Ascending aorta (tissue), 2 donors: ENCODE measurements at regions of chr4 and their contacts with region 1.

Region 1: DNA sequence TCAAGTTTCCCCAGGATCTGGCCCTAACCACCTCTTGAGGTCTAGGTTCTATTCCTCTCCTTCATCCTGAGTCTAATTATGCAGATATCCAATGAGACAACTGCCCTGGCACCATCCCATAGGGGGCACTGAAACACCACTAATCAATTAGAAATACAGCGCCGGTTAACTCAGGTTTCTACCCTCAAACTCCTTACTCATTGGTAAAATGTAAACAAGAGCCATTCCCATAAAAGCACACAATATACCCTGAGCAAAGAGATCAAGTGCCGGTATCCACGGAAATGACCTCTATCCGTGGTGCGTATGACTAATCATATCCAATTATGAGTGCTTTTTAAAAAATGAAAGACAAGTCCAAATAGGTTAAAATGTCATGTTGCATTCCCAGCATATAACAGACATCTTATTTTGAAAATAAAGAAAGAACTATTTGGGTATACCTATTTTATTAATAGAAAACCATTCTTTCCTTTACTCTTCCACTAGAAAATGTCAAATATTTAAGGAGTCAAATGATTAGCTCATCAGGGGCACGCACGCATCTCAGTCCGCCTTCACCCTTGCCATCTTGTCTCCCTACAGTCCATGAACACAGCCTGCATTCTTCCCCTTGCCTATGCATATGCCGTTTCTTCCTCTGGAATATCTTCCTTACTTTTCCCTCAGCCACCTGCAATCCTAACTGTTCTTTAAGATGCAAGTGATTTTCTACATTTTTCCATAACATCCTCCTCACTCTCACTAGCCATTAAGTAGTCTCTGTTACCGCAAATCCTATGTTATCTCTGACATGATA is 141.1 kb downstream of the MAML3 start:
- DNase-seq: peak in 1 of 2 donors; percentile 75
- H3K4me3 ChIP-seq: peak overlapping the region in 1 of 2 donors; percentile 20
- H3K27ac ChIP-seq: no peak overlapping the region
- H3K4me1 ChIP-seq: peaks cover 0 to 5% of the 10 kb centered on the region in 2 donors
- H3K27me3 ChIP-seq: no peaks in the 10 kb centered on the region
- CTCF ChIP-seq: peak; percentile 34 to 53 (median 50)

Region 2: DNA sequence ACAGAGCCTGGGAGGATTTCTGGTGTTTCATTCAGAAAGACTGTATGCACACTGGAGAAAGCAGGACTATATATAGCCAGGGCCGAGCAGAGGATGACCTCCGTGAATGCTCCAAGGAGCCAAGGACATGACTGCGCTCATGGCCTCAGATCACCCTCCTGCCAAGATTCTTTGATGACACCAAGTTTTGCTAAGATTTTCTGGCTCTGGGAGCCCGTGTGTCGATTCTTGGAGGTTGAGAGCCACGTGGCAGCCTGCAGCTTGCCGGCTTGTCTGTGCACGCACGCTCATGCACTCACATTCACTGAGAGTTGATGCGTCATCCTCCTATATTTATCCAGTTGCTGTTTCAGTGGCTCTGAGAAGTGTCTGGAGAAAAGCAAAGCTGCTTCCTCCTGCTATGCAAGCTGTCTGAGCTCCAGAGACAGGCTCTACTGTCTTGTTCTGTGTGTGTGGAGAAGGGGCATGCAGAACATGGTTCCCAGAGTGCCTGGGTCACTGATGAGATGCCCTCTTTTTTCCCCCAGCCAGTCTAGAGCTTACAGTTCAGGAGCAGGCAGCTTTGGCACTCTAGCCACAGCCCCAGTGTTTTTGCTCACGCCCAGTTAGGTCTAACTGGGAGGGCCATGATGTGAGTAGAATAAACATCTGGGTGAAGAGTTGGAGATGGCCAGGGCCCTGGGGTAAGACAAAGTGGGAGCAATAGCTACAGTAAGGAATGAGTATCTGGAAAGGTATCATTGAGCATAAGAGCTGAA is 295.7 kb after region 1 on chr4:
- intact Hi-C with region 1: loop called (anchors 5 kb)
- DNase-seq: peak; percentile 16 to 81
- H3K4me3 ChIP-seq: peak overlapping the region; percentile 0 to 33
- H3K27ac ChIP-seq: peak overlapping the region; percentile 67
- H3K4me1 ChIP-seq: peaks cover 3 to 13% of the 10 kb centered on the region in 2 donors
- H3K27me3 ChIP-seq: no peaks in the 10 kb centered on the region
- CTCF ChIP-seq: no peak